HEK293 (cell line): ENCODE measurements at regions of chr1 and their contacts with region 1.

Region 1: DNA sequence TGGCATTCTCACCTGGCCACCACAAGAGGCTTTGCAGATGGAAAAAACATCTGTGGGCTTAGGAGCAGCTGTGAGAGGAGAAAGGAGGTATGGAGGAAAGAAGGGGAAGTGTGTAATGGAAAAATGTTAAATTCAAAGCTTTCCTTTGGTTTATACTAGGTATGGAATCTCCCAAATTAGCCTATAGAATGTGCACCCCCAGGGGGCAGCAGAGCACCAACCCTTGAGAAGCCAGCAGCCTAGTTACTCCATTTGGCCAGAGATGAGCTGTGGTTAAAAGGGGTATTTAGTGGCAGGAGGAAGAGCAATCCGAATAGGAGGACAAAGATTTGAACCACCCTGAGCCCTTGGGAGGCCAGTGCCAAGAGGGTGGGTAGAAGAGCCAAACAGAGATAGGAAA is 97.5 kb upstream of the CTTNBP2NL start:
- H3K4me3 ChIP-seq: no peak overlapping the region
- H3K27ac ChIP-seq: no peak overlapping the region
- H3K4me1 ChIP-seq: no peaks in the 10 kb centered on the region
- CTCF ChIP-seq: peak; percentile 28; the same call in 1 of the 2 replicates

Region 2: DNA sequence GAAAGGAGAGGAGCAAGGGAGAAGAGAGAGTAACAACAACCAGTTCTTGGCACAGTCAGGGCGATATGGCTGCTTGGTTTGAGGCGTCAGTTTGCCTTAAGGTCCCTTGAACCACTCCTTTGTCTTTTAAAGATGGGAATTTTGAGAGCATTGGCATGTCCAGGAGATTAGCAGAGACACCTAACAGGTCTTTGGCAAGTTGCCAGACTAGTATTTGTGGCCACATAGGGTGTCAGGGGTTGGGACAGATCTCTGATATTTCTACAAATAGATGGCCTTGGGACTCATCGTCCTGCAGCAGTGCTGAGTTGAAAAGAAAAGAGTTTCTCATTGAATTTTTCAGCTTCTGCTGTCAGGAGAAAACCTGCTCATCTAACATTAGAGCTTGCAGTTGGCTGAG is 253.8 kb before region 1 on chr1:
- CTCF ChIA-PET with region 1: no interaction called
- POLR2A ChIA-PET with region 1: no interaction called
- H3K4me3 ChIP-seq: no peak overlapping the region
- H3K27ac ChIP-seq: no peak overlapping the region
- H3K4me1 ChIP-seq: no peaks in the 10 kb centered on the region
- CTCF ChIP-seq: no peak

Region 3: GRCh38 chr1:112285746-112286145 is 12.8 kb before region 1 on chr1:
- CTCF ChIA-PET with region 1: interaction called, 16 read pairs
- POLR2A ChIA-PET with region 1: no interaction called
- H3K4me3 ChIP-seq: no peak overlapping the region
- H3K27ac ChIP-seq: no peak overlapping the region
- H3K4me1 ChIP-seq: no peaks in the 10 kb centered on the region
- CTCF ChIP-seq: no peak

Region 4: GRCh38 chr1:112337028-112337531 is 38.5 kb after region 1 on chr1:
- CTCF ChIA-PET with region 1: interaction called, 14 read pairs
- POLR2A ChIA-PET with region 1: no interaction called
- H3K4me3 ChIP-seq: no peak overlapping the region
- H3K27ac ChIP-seq: no peak overlapping the region
- H3K4me1 ChIP-seq: no peaks in the 10 kb centered on the region
- CTCF ChIP-seq: no peak; the same call in 1 of the 2 replicates

Region 5: GRCh38 chr1:112472142-112472541 is 173.6 kb after region 1 on chr1:
- CTCF ChIA-PET with region 1: no interaction called
- POLR2A ChIA-PET with region 1: no interaction called
- H3K4me3 ChIP-seq: no peak overlapping the region
- H3K27ac ChIP-seq: no peak overlapping the region
- H3K4me1 ChIP-seq: no peaks in the 10 kb centered on the region
- CTCF ChIP-seq: no peak